ENCODE measurements at regions of chr2 and their contacts with region 1.

Region 1: GRCh38 chr2:164717000-164717803 is 95.9 kb upstream of the GRB14 start:
- DNase-seq: no peak
- ATAC-seq: no peak
- H3K4me3 ChIP-seq: no peak overlapping the region
- H3K27ac ChIP-seq: no peak overlapping the region
- H3K4me1 ChIP-seq: no peaks in the 10 kb centered on the region
- H3K27me3 ChIP-seq: no peaks in the 10 kb centered on the region
- CTCF ChIP-seq: peak in 3 of 5 experiments; percentile 48 to 63 (median 53)
- POLR2A ChIP-seq: no peak

Region 2: GRCh38 chr2:164538240-164538866 is 178.8 kb before region 1 on chr2:
- in situ Hi-C with region 1: no loop called
- intact Hi-C with region 1: no loop called
- DNase-seq: no peak
- ATAC-seq: no peak
- H3K4me3 ChIP-seq: no peak overlapping the region
- H3K27ac ChIP-seq: no peak overlapping the region
- H3K4me1 ChIP-seq: peaks cover 2 to 4% of the 10 kb centered on the region in 2 donors
- H3K27me3 ChIP-seq: no peaks in the 10 kb centered on the region
- CTCF ChIP-seq: peak in 4 of 5 experiments; percentile 15 to 49 (median 32)
- POLR2A ChIP-seq: no peak

Region 3: GRCh38 chr2:164560181-164560792 is 156.9 kb before region 1 on chr2:
- in situ Hi-C with region 1: loop called in 1 of 4 experiments (anchors 10 kb)
- intact Hi-C with region 1: loop called (anchors 2 kb)
- DNase-seq: no peak
- ATAC-seq: peak in 1 of 2 donors; percentile 30
- H3K4me3 ChIP-seq: no peak overlapping the region
- H3K27ac ChIP-seq: peak overlapping the region in 1 of 4 donors; percentile 27
- H3K4me1 ChIP-seq: peaks cover 0 to 21% of the 10 kb centered on the region in 2 donors
- H3K27me3 ChIP-seq: no peaks in the 10 kb centered on the region
- CTCF ChIP-seq: peak; percentile 39 to 68 (median 51)
- POLR2A ChIP-seq: no peak

Measured in gastrocnemius medialis (tissue), 4 donors.